Activated CD8-positive, alpha-beta T cell treated with anti-CD3 and anti-CD28 coated beads for 36 hours (primary cell): ENCODE measurements at regions of chr5 and their contacts with region 1.

Region 1: GRCh38 chr5:159106569-159107282 is 7.0 kb upstream of the EBF1 start:
- DNase-seq: peak; percentile 82
- ATAC-seq: peak; percentile 83
- H3K4me3 Mint-ChIP-seq: peak overlapping the region; percentile 56
- H3K27ac Mint-ChIP-seq: no peak overlapping the region
- H3K4me1 Mint-ChIP-seq: peaks cover 15% of the 10 kb centered on the region
- H3K27me3 Mint-ChIP-seq: peaks cover 45% of the 10 kb centered on the region
- CTCF ChIP-seq: peak; percentile 94

Region 2: DNA sequence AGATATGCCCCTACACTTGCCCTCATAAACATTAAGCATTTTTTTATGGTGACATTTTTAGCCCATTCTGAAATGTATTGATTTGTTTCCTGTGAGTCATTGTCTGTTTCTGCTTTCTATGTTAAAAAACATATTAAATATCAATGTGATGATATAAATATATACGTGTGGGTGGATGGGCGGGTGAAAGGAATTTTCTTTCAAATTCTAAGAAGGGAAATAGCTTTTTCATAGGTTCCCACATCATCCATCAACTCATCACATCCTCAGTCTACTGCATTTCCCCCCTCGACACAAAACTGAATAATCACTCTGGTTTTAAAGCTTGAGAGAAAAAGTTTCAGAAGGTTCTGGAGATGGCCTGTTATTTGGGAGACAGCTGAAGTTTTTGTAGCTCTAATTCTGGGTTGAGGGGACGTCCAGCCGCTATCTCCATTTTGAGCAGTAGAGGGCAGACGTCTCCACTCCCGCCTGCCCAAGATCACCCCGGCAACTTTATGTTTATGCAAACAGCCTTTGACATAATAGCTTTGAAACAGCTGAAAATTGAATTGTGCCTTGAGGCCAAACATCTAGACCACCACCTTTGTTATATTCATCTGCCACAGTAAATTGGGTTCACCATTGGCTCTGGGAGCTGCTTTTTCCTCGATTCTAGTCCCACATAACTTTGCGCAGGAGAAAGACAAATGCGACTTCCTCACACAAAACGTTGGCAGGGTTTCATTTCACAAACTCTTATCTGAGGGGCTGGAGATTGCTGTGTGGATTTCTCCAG is 1031.5 kb before region 1 on chr5:
- CTCF ChIA-PET with region 1: interaction called, 23 read pairs
- POLR2A ChIA-PET with region 1: no interaction called
- intact Hi-C with region 1: no loop called
- DNase-seq: peak; percentile 62
- ATAC-seq: peak; percentile 90
- H3K4me3 Mint-ChIP-seq: no peak overlapping the region
- H3K27ac Mint-ChIP-seq: no peak overlapping the region
- H3K4me1 Mint-ChIP-seq: peaks cover 9% of the 10 kb centered on the region
- H3K27me3 Mint-ChIP-seq: peaks cover 2% of the 10 kb centered on the region
- CTCF ChIP-seq: peak; percentile 65

Region 3: GRCh38 chr5:158174918-158175851 is 931.5 kb before region 1 on chr5:
- CTCF ChIA-PET with region 1: interaction called, 46 read pairs
- POLR2A ChIA-PET with region 1: interaction called, 3 read pairs
- intact Hi-C with region 1: no loop called
- DNase-seq: peak; percentile 72
- ATAC-seq: peak; percentile 42
- H3K4me3 Mint-ChIP-seq: no peak overlapping the region
- H3K27ac Mint-ChIP-seq: no peak overlapping the region
- H3K4me1 Mint-ChIP-seq: no peaks in the 10 kb centered on the region
- H3K27me3 Mint-ChIP-seq: no peaks in the 10 kb centered on the region
- CTCF ChIP-seq: peak; percentile 76

Region 4: DNA sequence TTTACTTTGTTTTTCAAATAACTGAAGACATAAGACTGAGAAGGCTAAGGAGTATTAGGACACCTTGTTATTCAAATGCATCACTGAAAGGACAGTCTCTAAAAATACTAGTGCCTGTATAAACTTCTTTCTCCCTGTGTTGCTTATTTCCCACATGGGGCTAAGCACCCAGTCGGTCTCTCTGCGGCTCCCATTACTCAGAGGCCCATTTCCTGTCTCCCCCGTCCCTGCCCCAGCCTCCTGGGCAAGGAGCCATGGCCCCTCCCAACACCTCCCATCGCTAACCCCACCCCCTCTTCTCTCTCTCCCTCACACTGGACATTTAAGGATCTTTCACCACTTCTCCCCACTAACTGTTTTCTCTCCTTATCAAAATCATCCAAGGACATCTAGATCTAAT is 88.9 kb before region 1 on chr5:
- CTCF ChIA-PET with region 1: no interaction called
- POLR2A ChIA-PET with region 1: no interaction called
- intact Hi-C with region 1: no loop called
- DNase-seq: peak; percentile 10
- ATAC-seq: no peak
- H3K4me3 Mint-ChIP-seq: no peak overlapping the region
- H3K27ac Mint-ChIP-seq: no peak overlapping the region
- H3K4me1 Mint-ChIP-seq: peaks cover 4% of the 10 kb centered on the region
- H3K27me3 Mint-ChIP-seq: no peaks in the 10 kb centered on the region
- CTCF ChIP-seq: no peak

Region 5: GRCh38 chr5:159058716-159059636 is 47.8 kb before region 1 on chr5:
- CTCF ChIA-PET with region 1: interaction called, 5 read pairs
- POLR2A ChIA-PET with region 1: no interaction called
- intact Hi-C with region 1: loop called (anchors 5 kb)
- DNase-seq: no peak
- ATAC-seq: no peak
- H3K4me3 Mint-ChIP-seq: no peak overlapping the region
- H3K27ac Mint-ChIP-seq: no peak overlapping the region
- H3K4me1 Mint-ChIP-seq: no peaks in the 10 kb centered on the region
- H3K27me3 Mint-ChIP-seq: peaks cover 9% of the 10 kb centered on the region
- CTCF ChIP-seq: no peak

Region 6: DNA sequence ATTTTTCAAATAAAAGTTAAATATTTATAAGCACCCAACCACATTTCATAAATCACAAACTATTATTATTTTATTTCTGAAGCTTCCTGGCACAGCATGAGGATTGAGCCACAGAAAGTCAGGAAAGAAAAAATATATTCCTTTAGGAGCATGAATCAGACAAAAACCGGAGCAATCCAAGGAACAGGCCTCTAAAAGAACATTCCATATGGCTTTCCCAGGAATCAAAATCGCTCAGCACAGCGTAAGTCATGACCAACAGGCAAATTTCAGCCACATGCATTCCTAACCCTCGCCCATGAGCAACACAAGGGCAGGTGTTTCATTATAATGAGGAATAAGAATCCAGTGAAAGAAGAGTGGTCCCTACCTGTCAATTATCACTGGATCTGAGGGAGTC is 33.7 kb before region 1 on chr5:
- CTCF ChIA-PET with region 1: no interaction called
- POLR2A ChIA-PET with region 1: no interaction called
- intact Hi-C with region 1: no loop called
- DNase-seq: no peak
- ATAC-seq: no peak
- H3K4me3 Mint-ChIP-seq: no peak overlapping the region
- H3K27ac Mint-ChIP-seq: no peak overlapping the region
- H3K4me1 Mint-ChIP-seq: peaks cover 7% of the 10 kb centered on the region
- H3K27me3 Mint-ChIP-seq: peaks cover 19% of the 10 kb centered on the region
- CTCF ChIP-seq: no peak

Region 7: GRCh38 chr5:159120446-159120845 is 13.7 kb after region 1 on chr5:
- CTCF ChIA-PET with region 1: interaction called, 18 read pairs
- POLR2A ChIA-PET with region 1: no interaction called
- intact Hi-C with region 1: no loop called
- DNase-seq: no peak
- ATAC-seq: peak; percentile 78
- H3K4me3 Mint-ChIP-seq: peak overlapping the region; percentile 51
- H3K27ac Mint-ChIP-seq: peak overlapping the region; percentile 84
- H3K4me1 Mint-ChIP-seq: peaks cover 26% of the 10 kb centered on the region
- H3K27me3 Mint-ChIP-seq: no peaks in the 10 kb centered on the region
- CTCF ChIP-seq: no peak

Region 8: GRCh38 chr5:159198063-159199036 is 91.6 kb after region 1 on chr5:
- CTCF ChIA-PET with region 1: no interaction called
- POLR2A ChIA-PET with region 1: no interaction called
- intact Hi-C with region 1: no loop called
- DNase-seq: no peak
- ATAC-seq: peak; percentile 87
- H3K4me3 Mint-ChIP-seq: no peak overlapping the region
- H3K27ac Mint-ChIP-seq: peak overlapping the region; percentile 76
- H3K4me1 Mint-ChIP-seq: peaks cover 71% of the 10 kb centered on the region
- H3K27me3 Mint-ChIP-seq: no peaks in the 10 kb centered on the region
- CTCF ChIP-seq: no peak